Breast epithelium (tissue), 4 donors: ENCODE measurements at regions of chr13 and their contacts with region 1.

Region 1: DNA sequence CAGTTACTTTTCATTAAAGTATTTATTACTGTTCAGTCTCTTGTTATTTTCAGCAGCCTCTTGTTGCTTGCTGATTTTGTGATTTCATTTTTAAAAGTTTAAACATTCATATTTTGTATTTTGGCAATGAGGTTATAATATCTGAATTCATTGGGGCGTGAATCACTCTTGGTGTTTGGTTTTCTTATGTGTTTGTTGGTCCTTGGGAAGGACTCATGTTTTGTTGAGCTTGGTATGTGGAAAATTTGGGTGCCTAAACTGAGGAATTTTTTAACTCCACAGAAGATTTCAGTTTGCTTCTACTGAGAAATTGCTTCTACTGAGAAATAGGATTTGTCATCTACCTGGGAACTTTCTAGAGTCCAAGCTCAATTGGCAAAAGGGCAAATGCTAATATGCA is 38.2 kb downstream of the PDS5B start:
- DNase-seq: no peak
- H3K4me3 ChIP-seq: no peak overlapping the region
- H3K27ac ChIP-seq: no peak overlapping the region
- H3K4me1 ChIP-seq: no peaks in the 10 kb centered on the region
- H3K27me3 ChIP-seq: no peaks in the 10 kb centered on the region
- CTCF ChIP-seq: no peak
- POLR2A ChIP-seq: no peak

Region 2: GRCh38 chr13:30659980-30660379 is 1964.5 kb before region 1 on chr13:
- intact Hi-C with region 1: loop called (anchors 10 kb)
- DNase-seq: no peak
- H3K4me3 ChIP-seq: no peak overlapping the region
- H3K27ac ChIP-seq: peak overlapping the region in 1 of 2 donors; percentile 11
- H3K4me1 ChIP-seq: no peaks in the 10 kb centered on the region
- H3K27me3 ChIP-seq: no peaks in the 10 kb centered on the region
- CTCF ChIP-seq: no peak
- POLR2A ChIP-seq: no peak

Region 3: GRCh38 chr13:32586080-32586900 is 38.2 kb before region 1 on chr13 and contains the start of gene PDS5B:
- intact Hi-C with region 1: no loop called
- DNase-seq: peak; percentile 91 to 92
- H3K4me3 ChIP-seq: peak within 1 kb of the TSS; percentile 74 to 91 (median 79)
- H3K27ac ChIP-seq: peak within 1 kb of the TSS; percentile 92 to 98
- H3K4me1 ChIP-seq: peaks cover 0 to 17% of the 10 kb centered on the region in 2 donors
- H3K27me3 ChIP-seq: no peaks in the 10 kb centered on the region
- CTCF ChIP-seq: peak; percentile 64 to 99 (median 65)
- POLR2A ChIP-seq: peak; percentile 17
- total RNA-seq, gene PDS5B: 35.0 to 71.7 (median 66.2) TPM